Caco-2 (cell line): ENCODE measurements at regions of chr15 and their contacts with region 1.

Region 1: GRCh38 chr15:80585544-80586018 is 109.5 kb upstream of the ABHD17C start:
- DNase-seq: no peak
- H3K4me3 ChIP-seq: no peak overlapping the region
- H3K4me3 Mint-ChIP-seq: no peak overlapping the region
- H3K27ac Mint-ChIP-seq: no peak overlapping the region
- H3K4me1 ChIP-seq: peaks cover 6% of the 10 kb centered on the region
- H3K4me1 Mint-ChIP-seq: peaks cover 28% of the 10 kb centered on the region
- H3K27me3 ChIP-seq: no peaks in the 10 kb centered on the region
- H3K27me3 Mint-ChIP-seq: no peaks in the 10 kb centered on the region
- CTCF ChIP-seq: no peak

Region 2: GRCh38 chr15:80567721-80568157 is 17.8 kb before region 1 on chr15:
- CTCF ChIA-PET with region 1: no interaction called
- POLR2A ChIA-PET with region 1: no interaction called
- intact Hi-C with region 1: loop called (anchors 2 kb)
- DNase-seq: peak; percentile 50 to 65
- H3K4me3 ChIP-seq: no peak overlapping the region
- H3K4me3 Mint-ChIP-seq: no peak overlapping the region
- H3K27ac Mint-ChIP-seq: no peak overlapping the region
- H3K4me1 ChIP-seq: no peaks in the 10 kb centered on the region
- H3K4me1 Mint-ChIP-seq: no peaks in the 10 kb centered on the region
- H3K27me3 ChIP-seq: no peaks in the 10 kb centered on the region
- H3K27me3 Mint-ChIP-seq: peaks cover 17% of the 10 kb centered on the region
- CTCF ChIP-seq: peak; percentile 67 to 84